A673 (cell line): ENCODE measurements at regions of chr20 and their contacts with region 1.

Region 1: DNA sequence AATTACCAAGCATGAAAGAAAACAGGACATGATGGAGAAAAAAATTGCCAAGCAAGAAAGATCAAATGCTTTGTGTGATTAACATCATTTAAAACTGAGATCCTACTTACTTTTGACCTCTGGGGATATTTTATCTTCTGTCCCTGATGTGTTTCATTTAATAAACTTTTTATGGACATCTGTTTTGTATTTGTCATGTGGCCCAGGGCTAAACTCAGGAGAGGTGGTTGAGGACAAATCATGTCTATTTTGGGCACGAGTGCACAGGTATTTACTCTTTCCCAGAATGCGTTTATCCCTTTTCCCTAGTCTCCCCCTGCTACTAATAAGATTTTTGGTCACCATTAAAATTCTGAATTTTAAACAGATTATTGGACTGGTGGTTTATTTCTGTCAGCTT is 128.2 kb downstream of the NCOA3 start:
- DNase-seq: no peak
- H3K4me3 ChIP-seq: no peak overlapping the region
- H3K27ac ChIP-seq: no peak overlapping the region
- H3K4me1 ChIP-seq: no peaks in the 10 kb centered on the region
- H3K27me3 ChIP-seq: no peaks in the 10 kb centered on the region
- CTCF ChIP-seq: no peak

Region 2: GRCh38 chr20:47220161-47220582 is 409.7 kb before region 1 on chr20:
- CTCF ChIA-PET with region 1: interaction called, 9 read pairs
- POLR2A ChIA-PET with region 1: no interaction called
- intact Hi-C with region 1: loop called (anchors 5 kb)
- DNase-seq: peak; percentile 65
- H3K4me3 ChIP-seq: no peak overlapping the region
- H3K27ac ChIP-seq: no peak overlapping the region
- H3K4me1 ChIP-seq: no peaks in the 10 kb centered on the region
- H3K27me3 ChIP-seq: no peaks in the 10 kb centered on the region
- CTCF ChIP-seq: peak; percentile 83

Region 3: GRCh38 chr20:47356526-47357295 is 273.2 kb before region 1 on chr20 and contains the start of gene ZMYND8:
- CTCF ChIA-PET with region 1: no interaction called
- POLR2A ChIA-PET with region 1: no interaction called
- intact Hi-C with region 1: no loop called
- DNase-seq: peak; percentile 96
- H3K4me3 ChIP-seq: peak within 1 kb of the TSS; percentile 32
- H3K27ac ChIP-seq: peak within 1 kb of the TSS; percentile 97
- H3K4me1 ChIP-seq: peaks cover 79% of the 10 kb centered on the region
- H3K27me3 ChIP-seq: no peaks in the 10 kb centered on the region
- CTCF ChIP-seq: no peak
- total RNA-seq, gene ZMYND8: 31.3 and 35.2 TPM in 2 replicates

Region 4: GRCh38 chr20:47392015-47392720 is 237.7 kb before region 1 on chr20:
- CTCF ChIA-PET with region 1: no interaction called
- POLR2A ChIA-PET with region 1: no interaction called
- intact Hi-C with region 1: loop called (anchors 5 kb)
- DNase-seq: peak; percentile 79
- H3K4me3 ChIP-seq: no peak overlapping the region
- H3K27ac ChIP-seq: no peak overlapping the region
- H3K4me1 ChIP-seq: no peaks in the 10 kb centered on the region
- H3K27me3 ChIP-seq: no peaks in the 10 kb centered on the region
- CTCF ChIP-seq: no peak

Region 5: GRCh38 chr20:47568001-47568407 is 61.9 kb before region 1 on chr20:
- CTCF ChIA-PET with region 1: no interaction called
- POLR2A ChIA-PET with region 1: no interaction called
- intact Hi-C with region 1: no loop called
- DNase-seq: no peak
- H3K4me3 ChIP-seq: no peak overlapping the region
- H3K27ac ChIP-seq: no peak overlapping the region
- H3K4me1 ChIP-seq: peaks cover 5% of the 10 kb centered on the region
- H3K27me3 ChIP-seq: no peaks in the 10 kb centered on the region
- CTCF ChIP-seq: no peak